ENCODE measurements at regions of chr17 and their contacts with region 1.

Region 1: GRCh38 chr17:18129041-18129502 is 20.5 kb downstream of the MYO15A start:
- DNase-seq: no peak
- H3K4me3 ChIP-seq: no peak overlapping the region
- H3K27ac ChIP-seq: no peak overlapping the region
- H3K4me1 ChIP-seq: no peaks in the 10 kb centered on the region; a peak in 1 of 7 replicates
- H3K27me3 ChIP-seq: peaks cover 0 to 3% (median 2%) of the 10 kb centered on the region in 4 experiments; a peak in 4 of 7 replicates
- CTCF ChIP-seq: no peak
- EP300 ChIP-seq: no peak
- POLR2A ChIP-seq: no peak
- RAD21 ChIP-seq: no peak

Region 2: GRCh38 chr17:18108401-18109312 is 20.4 kb before region 1 on chr17 and contains the start of gene MYO15A:
- CTCF ChIA-PET with region 1: interaction called, 3 read pairs
- POLR2A ChIA-PET with region 1: interaction called, 17 read pairs
- DNase-seq: no peak
- H3K4me3 ChIP-seq: no peak within 1 kb of the TSS
- H3K27ac ChIP-seq: no peak within 1 kb of the TSS
- H3K4me1 ChIP-seq: peaks cover 0 to 7% (median 3%) of the 10 kb centered on the region in 4 experiments; a peak in 3 of 7 replicates
- H3K27me3 ChIP-seq: no peaks in the 10 kb centered on the region
- CTCF ChIP-seq: no peak
- EP300 ChIP-seq: no peak
- POLR2A ChIP-seq: no peak; a peak in 1 of 3 replicates
- RAD21 ChIP-seq: no peak
- total RNA-seq, gene MYO15A: 1.5 and 1.6 TPM in 2 replicates

Region 3: DNA sequence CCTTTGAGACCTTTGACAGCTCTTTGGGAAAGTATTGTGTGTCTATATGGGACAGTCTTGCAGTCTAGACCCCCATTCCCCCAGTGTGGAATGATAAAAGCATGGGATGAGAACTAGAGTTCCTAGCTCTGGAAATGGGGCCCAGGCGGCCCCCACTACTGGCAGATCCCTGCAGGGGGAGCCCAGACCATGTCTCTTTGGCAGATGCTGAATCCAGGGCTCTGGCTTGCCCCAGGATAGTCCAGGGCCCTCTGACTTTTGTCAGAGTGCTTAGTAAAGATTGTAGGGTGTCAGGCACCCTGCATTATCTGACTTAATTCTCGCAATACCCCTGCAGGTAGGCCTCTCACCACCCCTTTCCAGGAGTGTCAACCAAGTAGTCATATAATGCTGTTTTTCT is 62.9 kb after region 1 on chr17:
- CTCF ChIA-PET with region 1: no interaction called
- POLR2A ChIA-PET with region 1: no interaction called
- DNase-seq: peak in 1 of 2 experiments; percentile 61
- H3K4me3 ChIP-seq: no peak overlapping the region
- H3K27ac ChIP-seq: no peak overlapping the region
- H3K4me1 ChIP-seq: peaks cover 0 to 3% (median 1%) of the 10 kb centered on the region in 4 experiments; a peak in 2 of 7 replicates
- H3K27me3 ChIP-seq: no peaks in the 10 kb centered on the region
- CTCF ChIP-seq: peak; percentile 38 to 56 (median 55)
- EP300 ChIP-seq: no peak
- POLR2A ChIP-seq: no peak
- RAD21 ChIP-seq: peak; percentile 42 to 64; a peak in 3 of 4 replicates

Measured in H1 (cell line).